MCF 10A (cell line): ENCODE measurements at regions of chr4 and their contacts with region 1.

Region 1: GRCh38 chr4:156475322-156475721 is 496.3 kb downstream of the PDGFC start:
- DNase-seq: peak; percentile 70
- H3K4me3 Mint-ChIP-seq: no peak overlapping the region
- H3K27ac Mint-ChIP-seq: peak overlapping the region; percentile 88
- H3K4me1 Mint-ChIP-seq: peaks cover 11% of the 10 kb centered on the region
- H3K27me3 Mint-ChIP-seq: no peaks in the 10 kb centered on the region
- CTCF ChIP-seq: peak; percentile 65

Region 2: GRCh38 chr4:156109949-156110900 is 365.1 kb before region 1 on chr4:
- CTCF ChIA-PET with region 1: interaction called, 22 read pairs
- POLR2A ChIA-PET with region 1: interaction called, 5 read pairs
- intact Hi-C with region 1: no loop called
- DNase-seq: peak; percentile 81
- H3K4me3 Mint-ChIP-seq: no peak overlapping the region
- H3K27ac Mint-ChIP-seq: peak overlapping the region; percentile 50
- H3K4me1 Mint-ChIP-seq: peaks cover 21% of the 10 kb centered on the region
- H3K27me3 Mint-ChIP-seq: no peaks in the 10 kb centered on the region
- CTCF ChIP-seq: peak; percentile 19

Region 3: GRCh38 chr4:156128616-156129015 is 346.7 kb before region 1 on chr4:
- CTCF ChIA-PET with region 1: no interaction called
- POLR2A ChIA-PET with region 1: no interaction called
- intact Hi-C with region 1: no loop called
- DNase-seq: no peak
- H3K4me3 Mint-ChIP-seq: no peak overlapping the region
- H3K27ac Mint-ChIP-seq: no peak overlapping the region
- H3K4me1 Mint-ChIP-seq: no peaks in the 10 kb centered on the region
- H3K27me3 Mint-ChIP-seq: no peaks in the 10 kb centered on the region
- CTCF ChIP-seq: no peak

Region 4: DNA sequence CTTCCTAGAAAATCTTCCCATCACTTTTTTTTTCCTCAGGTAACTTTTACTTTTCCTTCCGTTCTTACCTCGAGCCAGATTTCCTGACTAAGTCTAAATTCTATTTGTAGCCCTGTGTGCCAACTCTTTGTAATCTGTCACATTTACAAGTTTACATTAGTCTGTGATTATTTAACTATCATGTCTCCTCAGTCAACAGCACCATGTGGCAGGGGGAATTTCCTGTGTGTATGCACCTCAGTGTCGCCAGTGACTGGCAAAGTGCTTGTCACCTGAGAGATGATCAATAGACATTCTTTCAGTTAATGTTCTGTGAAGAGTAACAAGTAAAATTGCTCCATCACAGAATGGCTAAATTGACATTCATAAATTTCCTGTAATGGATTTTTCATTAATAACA is 27.8 kb after region 1 on chr4:
- CTCF ChIA-PET with region 1: no interaction called
- POLR2A ChIA-PET with region 1: no interaction called
- intact Hi-C with region 1: no loop called
- DNase-seq: no peak
- H3K4me3 Mint-ChIP-seq: no peak overlapping the region
- H3K27ac Mint-ChIP-seq: no peak overlapping the region
- H3K4me1 Mint-ChIP-seq: no peaks in the 10 kb centered on the region
- H3K27me3 Mint-ChIP-seq: no peaks in the 10 kb centered on the region
- CTCF ChIP-seq: no peak

Region 5: DNA sequence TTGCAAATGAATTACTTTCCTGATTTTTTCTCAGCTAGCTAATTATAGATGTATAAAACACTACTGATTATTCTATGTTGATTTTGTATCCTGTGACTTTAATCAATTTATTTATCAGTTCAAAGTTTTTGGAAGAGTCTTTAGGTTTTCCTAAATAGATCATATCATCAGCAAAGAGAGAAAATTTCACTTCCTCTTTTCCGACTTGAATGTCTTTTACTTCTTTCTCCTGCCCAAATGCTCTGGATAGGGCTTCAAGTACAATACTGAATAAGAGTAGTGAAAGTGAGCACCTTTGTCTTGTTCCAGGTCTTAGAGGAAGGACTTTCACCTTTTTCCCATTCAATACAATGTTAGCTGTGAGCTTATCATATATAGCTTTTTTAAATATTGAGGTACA is 78.3 kb after region 1 on chr4:
- CTCF ChIA-PET with region 1: no interaction called
- POLR2A ChIA-PET with region 1: no interaction called
- intact Hi-C with region 1: no loop called
- DNase-seq: no peak
- H3K4me3 Mint-ChIP-seq: no peak overlapping the region
- H3K27ac Mint-ChIP-seq: no peak overlapping the region
- H3K4me1 Mint-ChIP-seq: no peaks in the 10 kb centered on the region
- H3K27me3 Mint-ChIP-seq: no peaks in the 10 kb centered on the region
- CTCF ChIP-seq: no peak

Region 6: GRCh38 chr4:156677131-156677531 is 201.8 kb after region 1 on chr4:
- CTCF ChIA-PET with region 1: interaction called, 25 read pairs
- POLR2A ChIA-PET with region 1: interaction called, 9 read pairs
- intact Hi-C with region 1: loop called (anchors 2 kb)
- DNase-seq: peak; percentile 61
- H3K4me3 Mint-ChIP-seq: no peak overlapping the region
- H3K27ac Mint-ChIP-seq: peak overlapping the region; percentile 21
- H3K4me1 Mint-ChIP-seq: no peaks in the 10 kb centered on the region
- H3K27me3 Mint-ChIP-seq: no peaks in the 10 kb centered on the region
- CTCF ChIP-seq: peak; percentile 25

Region 7: GRCh38 chr4:156931267-156931666 is 455.9 kb after region 1 on chr4:
- CTCF ChIA-PET with region 1: no interaction called
- POLR2A ChIA-PET with region 1: no interaction called
- intact Hi-C with region 1: loop called (anchors 1 kb)
- DNase-seq: peak; percentile 95
- H3K4me3 Mint-ChIP-seq: no peak overlapping the region
- H3K27ac Mint-ChIP-seq: peak overlapping the region; percentile 86
- H3K4me1 Mint-ChIP-seq: peaks cover 35% of the 10 kb centered on the region
- H3K27me3 Mint-ChIP-seq: no peaks in the 10 kb centered on the region
- CTCF ChIP-seq: no peak

Region 8: DNA sequence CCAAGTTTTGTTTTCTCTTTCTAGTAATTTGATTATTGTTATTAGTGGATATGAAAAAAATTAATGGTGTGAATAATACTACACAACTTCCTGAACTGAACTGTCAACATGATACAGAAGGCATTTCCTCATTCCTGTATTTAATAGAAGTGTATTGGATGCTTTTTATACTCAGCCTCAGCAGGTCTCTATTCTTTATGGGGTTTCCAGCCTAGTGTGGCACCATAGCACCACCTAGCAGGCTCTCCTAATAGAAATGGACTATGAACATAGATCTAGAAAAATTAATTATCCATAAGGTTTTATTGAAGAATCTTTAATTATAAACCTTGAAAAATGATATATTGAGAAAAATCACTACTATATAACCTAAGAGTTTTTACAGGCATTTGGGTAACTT is 653.1 kb after region 1 on chr4:
- CTCF ChIA-PET with region 1: interaction called, 4 read pairs
- POLR2A ChIA-PET with region 1: no interaction called
- intact Hi-C with region 1: loop called (anchors 1 kb)
- DNase-seq: peak; percentile 38
- H3K4me3 Mint-ChIP-seq: no peak overlapping the region
- H3K27ac Mint-ChIP-seq: no peak overlapping the region
- H3K4me1 Mint-ChIP-seq: no peaks in the 10 kb centered on the region
- H3K27me3 Mint-ChIP-seq: no peaks in the 10 kb centered on the region
- CTCF ChIP-seq: peak; percentile 64

Region 9: DNA sequence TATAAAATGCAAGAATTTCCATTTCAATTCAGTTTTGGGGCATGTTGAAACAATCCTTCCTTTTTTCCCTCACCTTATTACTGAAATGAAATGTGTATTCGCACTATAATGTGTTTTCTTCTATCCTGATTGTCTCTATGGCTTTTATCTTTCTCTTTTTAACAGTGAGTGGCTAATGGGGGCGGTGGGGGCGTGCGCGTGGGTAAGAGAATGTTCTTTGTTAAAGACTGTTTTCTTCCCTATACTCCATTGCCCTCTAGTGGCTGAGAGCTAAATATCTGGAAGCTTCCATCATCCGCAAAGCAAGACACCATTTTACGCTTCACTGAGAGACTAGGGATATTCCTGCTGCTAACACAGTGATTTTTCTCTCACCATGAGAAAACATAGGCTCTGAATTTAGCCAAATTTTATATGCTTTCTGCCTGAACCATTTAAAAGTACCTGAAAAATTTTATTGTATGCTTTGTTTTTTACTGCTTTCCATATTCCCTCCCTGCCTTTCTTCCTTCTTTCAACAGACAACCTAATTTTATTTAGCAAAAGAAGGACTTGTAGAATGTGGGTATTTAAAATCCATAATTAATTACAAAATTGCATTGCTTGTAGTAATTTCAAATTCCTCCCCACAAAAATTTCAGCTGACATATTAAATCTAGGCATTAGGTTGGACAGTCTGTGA is 1503.5 kb after region 1 on chr4:
- CTCF ChIA-PET with region 1: interaction called, 4 read pairs
- POLR2A ChIA-PET with region 1: no interaction called
- intact Hi-C with region 1: loop called (anchors 1 kb)
- DNase-seq: peak; percentile 68
- H3K4me3 Mint-ChIP-seq: peak overlapping the region; percentile 48
- H3K27ac Mint-ChIP-seq: no peak overlapping the region
- H3K4me1 Mint-ChIP-seq: peaks cover 15% of the 10 kb centered on the region
- H3K27me3 Mint-ChIP-seq: no peaks in the 10 kb centered on the region
- CTCF ChIP-seq: peak; percentile 84